ENCODE measurements at regions of chr7 and their contacts with region 1.

Region 1: DNA sequence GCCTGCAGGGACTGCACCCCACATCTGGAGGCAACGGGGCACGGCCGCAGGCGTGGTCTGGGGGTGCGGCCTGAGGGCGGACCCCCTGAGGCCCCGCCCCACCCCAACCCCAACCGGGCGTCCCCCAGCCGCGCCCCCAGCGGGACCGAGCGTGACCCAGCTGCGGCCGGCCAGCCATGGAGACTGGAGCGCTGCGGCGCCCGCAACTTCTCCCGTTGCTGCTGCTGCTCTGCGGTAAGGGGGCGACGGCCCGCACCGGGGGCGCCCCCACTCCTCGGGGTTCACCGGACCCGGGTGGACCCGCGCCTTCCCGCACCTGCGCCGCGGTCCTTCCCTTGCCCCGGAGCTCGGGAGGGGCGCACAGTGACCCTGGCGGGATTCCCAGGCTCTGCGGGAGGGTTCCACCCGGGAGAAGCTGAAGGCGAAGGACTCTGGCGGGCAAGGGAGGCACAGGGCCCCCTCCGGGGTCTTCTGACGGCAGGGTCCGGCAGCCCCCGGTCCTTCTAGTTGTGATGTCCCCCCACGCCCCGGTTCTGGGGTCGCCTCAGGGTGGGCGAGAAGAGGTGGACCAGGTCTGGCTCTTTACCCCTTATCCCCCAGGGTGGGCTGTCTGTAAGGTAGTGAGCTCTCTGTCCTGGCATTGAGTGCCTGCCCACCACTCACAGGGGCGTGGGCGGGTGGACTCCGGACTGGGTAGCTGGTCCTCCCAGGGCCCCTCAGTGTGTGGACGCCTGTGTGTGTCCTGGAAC is at the start of gene RAMP3:
- DNase-seq: peak in 1 of 2 donors; percentile 37
- H3K4me3 ChIP-seq: peak within 1 kb of the TSS; percentile 34 to 52 (median 40)
- H3K27ac ChIP-seq: peak within 1 kb of the TSS; percentile 21 to 66 (median 53)
- H3K4me1 ChIP-seq: peaks cover 0 to 14% (median 10%) of the 10 kb centered on the region in 4 donors
- H3K27me3 ChIP-seq: peaks cover 0 to 50% (median 20%) of the 10 kb centered on the region in 3 donors
- CTCF ChIP-seq: no peak
- EP300 ChIP-seq: no peak
- POLR2A ChIP-seq: no peak
- total RNA-seq, gene RAMP3: 2.6 to 17.6 (median 6.2) TPM

Region 2: GRCh38 chr7:45259966-45260646 is 102.3 kb after region 1 on chr7:
- intact Hi-C with region 1: loop called (anchors 2 kb)
- DNase-seq: peak; percentile 55 to 68
- H3K4me3 ChIP-seq: no peak overlapping the region
- H3K27ac ChIP-seq: no peak overlapping the region
- H3K4me1 ChIP-seq: peaks cover 0 to 4% (median 0%) of the 10 kb centered on the region in 4 donors
- H3K27me3 ChIP-seq: peaks cover 0 to 17% (median 0%) of the 10 kb centered on the region in 3 donors
- CTCF ChIP-seq: peak in 6 of 7 experiments; percentile 32 to 96 (median 84)
- EP300 ChIP-seq: no peak
- POLR2A ChIP-seq: no peak

Region 3: DNA sequence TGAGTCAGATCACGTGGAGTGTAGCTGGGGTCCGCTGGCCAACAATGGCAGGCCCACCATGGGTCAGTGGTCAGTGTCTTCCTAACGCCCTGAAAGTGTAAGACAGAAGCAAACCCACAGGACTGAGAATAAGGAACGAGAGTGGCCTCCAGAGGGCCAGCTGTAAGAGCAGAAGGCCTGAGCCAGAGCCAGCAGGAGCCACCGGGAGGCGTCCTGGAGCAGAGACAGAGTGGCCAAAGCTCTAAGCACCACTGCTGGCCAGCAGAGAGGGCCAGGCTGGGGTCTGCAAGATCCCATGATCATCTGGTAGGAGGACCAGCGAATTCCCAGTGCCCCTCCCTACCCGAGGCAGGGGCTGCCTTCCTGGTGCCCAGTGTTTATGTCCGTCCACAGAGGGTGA is 705.9 kb after region 1 on chr7:
- intact Hi-C with region 1: loop called (anchors 10 kb)
- DNase-seq: no peak
- H3K4me3 ChIP-seq: no peak overlapping the region
- H3K27ac ChIP-seq: no peak overlapping the region
- H3K4me1 ChIP-seq: no peaks in the 10 kb centered on the region
- H3K27me3 ChIP-seq: peaks cover 0 to 55% (median 0%) of the 10 kb centered on the region in 3 donors
- CTCF ChIP-seq: no peak
- EP300 ChIP-seq: no peak
- POLR2A ChIP-seq: no peak